CD8-positive, alpha-beta T cell (primary cell): ENCODE measurements at regions of chr1 and their contacts with region 1.

Region 1: GRCh38 chr1:30929135-30929889 is 20.8 kb upstream of the SDC3 start:
- DNase-seq: peak in 7 of 9 experiments; percentile 20 to 65 (median 51)
- ATAC-seq: peak; percentile 76
- H3K4me3 ChIP-seq: no peak overlapping the region
- H3K4me3 Mint-ChIP-seq: no peak overlapping the region
- H3K27ac ChIP-seq: peak overlapping the region in 1 of 2 experiments; percentile 55
- H3K27ac Mint-ChIP-seq: peak overlapping the region; percentile 10
- H3K4me1 ChIP-seq: peaks cover 3% of the 10 kb centered on the region
- H3K4me1 Mint-ChIP-seq: no peaks in the 10 kb centered on the region
- H3K27me3 ChIP-seq: no peaks in the 10 kb centered on the region
- H3K27me3 Mint-ChIP-seq: no peaks in the 10 kb centered on the region
- CTCF ChIP-seq: peak; percentile 76

Region 2: DNA sequence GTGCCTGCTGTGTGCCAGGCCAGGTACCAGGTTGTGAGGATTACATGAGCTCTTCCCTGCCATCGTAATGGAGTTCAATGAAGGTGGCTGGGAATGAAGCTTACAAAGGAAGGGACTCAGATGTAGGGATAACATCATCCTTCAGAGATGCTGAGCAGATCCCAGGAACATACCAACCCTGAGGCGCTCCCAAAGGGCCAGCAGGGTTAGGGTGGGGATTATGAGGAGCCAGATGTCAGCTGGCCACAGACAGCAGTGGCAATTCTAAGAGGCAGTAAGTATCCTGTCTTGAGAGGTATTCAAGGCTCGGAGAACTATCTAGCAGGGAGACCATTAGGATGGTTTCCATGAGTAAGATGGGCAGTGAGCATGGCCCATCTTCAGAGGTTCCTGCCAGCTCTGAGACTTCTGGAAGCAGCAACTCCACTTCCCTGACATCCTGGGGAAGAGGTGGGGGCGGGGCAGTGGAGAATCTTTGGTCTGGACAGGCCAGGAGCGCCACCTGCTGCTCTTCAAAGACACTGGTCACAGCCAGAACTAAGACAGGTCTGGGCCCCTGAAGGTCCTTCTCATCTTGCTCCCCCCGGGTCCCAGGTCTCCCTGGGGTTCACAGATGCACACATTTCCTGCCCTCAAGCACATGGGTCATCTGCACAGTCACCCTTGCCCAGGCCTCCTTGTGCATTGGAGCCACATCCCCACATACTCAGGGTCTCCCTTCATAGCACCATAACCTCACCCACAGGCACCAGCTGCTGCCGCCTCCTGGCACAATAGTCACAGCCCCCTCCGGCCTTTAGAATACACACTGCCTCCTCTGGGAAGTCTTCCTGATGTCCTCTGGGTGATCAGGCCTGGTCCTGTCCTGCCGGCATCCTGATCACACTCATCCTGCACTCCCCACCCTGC is 18.0 kb before region 1 on chr1:
- CTCF ChIA-PET with region 1: interaction called, 14 read pairs
- POLR2A ChIA-PET with region 1: no interaction called
- intact Hi-C with region 1: no loop called
- DNase-seq: peak in 7 of 9 experiments; percentile 29 to 67 (median 47)
- ATAC-seq: no peak
- H3K4me3 ChIP-seq: no peak overlapping the region
- H3K4me3 Mint-ChIP-seq: no peak overlapping the region
- H3K27ac ChIP-seq: no peak overlapping the region
- H3K27ac Mint-ChIP-seq: no peak overlapping the region
- H3K4me1 ChIP-seq: peaks cover 16% of the 10 kb centered on the region
- H3K4me1 Mint-ChIP-seq: peaks cover 17% of the 10 kb centered on the region
- H3K27me3 ChIP-seq: peaks cover 14 to 20% of the 10 kb centered on the region in 2 experiments
- H3K27me3 Mint-ChIP-seq: peaks cover 23% of the 10 kb centered on the region
- CTCF ChIP-seq: no peak

Region 3: DNA sequence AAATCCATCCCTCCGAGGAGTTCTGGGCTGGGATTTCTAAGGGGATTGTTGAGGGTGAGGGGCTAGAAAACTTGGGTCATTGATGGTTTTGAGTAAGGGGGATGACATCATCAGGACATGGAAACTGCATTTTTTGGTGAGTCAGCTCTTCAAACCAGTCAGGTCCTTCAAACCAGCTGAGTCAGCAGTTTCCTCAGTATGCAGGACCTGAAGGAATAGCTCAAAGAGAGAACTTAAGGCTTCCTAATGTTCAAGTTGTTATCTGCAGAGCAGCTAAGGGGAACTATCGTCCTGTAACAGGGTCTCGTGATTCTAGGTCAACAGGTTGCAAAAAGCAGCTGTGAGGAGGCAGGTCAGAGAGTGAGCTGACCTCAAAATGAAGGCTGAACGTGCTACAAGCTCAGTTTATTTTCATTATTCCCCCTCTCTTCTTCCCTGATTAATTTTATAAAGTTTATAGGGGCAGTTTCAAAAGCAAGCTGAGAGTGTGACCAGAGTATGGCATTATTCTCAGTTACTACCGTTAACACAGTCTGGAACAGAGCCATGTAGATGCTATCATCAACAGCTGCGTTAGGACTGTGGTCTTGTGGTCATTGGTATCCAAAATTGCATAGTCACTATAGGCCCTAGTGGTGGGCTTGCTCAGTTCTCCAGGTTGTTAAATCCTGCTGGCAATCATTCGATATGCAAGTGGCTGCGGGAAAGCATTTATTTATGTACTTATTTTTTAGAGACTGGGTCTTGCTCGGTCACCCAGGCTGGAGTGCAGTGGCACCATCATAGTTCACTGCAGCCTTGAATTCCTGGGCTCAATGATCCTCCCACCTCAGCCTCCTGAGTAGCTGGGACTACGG is 10.1 kb before region 1 on chr1:
- CTCF ChIA-PET with region 1: interaction called, 12 read pairs
- POLR2A ChIA-PET with region 1: no interaction called
- intact Hi-C with region 1: no loop called
- DNase-seq: peak in 2 of 9 experiments; percentile 15 to 25
- ATAC-seq: no peak
- H3K4me3 ChIP-seq: no peak overlapping the region
- H3K4me3 Mint-ChIP-seq: no peak overlapping the region
- H3K27ac ChIP-seq: no peak overlapping the region
- H3K27ac Mint-ChIP-seq: no peak overlapping the region
- H3K4me1 ChIP-seq: no peaks in the 10 kb centered on the region
- H3K4me1 Mint-ChIP-seq: no peaks in the 10 kb centered on the region
- H3K27me3 ChIP-seq: peaks cover 0 to 2% of the 10 kb centered on the region in 2 experiments
- H3K27me3 Mint-ChIP-seq: peaks cover 2% of the 10 kb centered on the region
- CTCF ChIP-seq: no peak

Region 4: DNA sequence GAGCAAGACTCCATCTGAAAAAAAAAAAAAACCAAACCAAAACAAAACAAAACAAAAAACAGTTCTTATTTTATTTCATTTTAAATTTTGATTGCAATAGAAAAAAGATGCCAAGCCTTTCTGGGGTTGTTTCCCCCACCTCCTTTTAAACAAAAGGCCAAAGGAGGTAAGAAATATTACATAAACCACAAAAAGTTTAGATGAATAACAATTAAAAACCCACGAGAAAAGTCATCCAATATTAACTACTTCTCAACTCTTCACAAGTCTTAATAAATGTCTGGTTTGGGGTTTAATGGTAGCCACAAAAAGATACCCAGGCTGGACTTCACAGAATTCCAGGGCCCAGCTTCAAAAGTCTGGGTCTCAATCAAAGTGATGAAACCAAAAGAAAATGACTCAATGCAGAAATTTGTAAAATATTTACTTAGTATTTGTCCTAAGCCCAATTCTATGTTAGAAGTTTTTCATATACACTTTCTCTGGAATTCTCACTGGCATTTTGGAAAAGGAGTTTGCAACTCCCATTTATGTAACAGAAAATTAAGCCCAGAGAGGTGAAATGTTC is 26.2 kb after region 1 on chr1:
- CTCF ChIA-PET with region 1: no interaction called
- POLR2A ChIA-PET with region 1: no interaction called
- intact Hi-C with region 1: no loop called
- DNase-seq: no peak
- ATAC-seq: no peak
- H3K4me3 ChIP-seq: no peak overlapping the region
- H3K4me3 Mint-ChIP-seq: no peak overlapping the region
- H3K27ac ChIP-seq: no peak overlapping the region
- H3K27ac Mint-ChIP-seq: peak overlapping the region; percentile 52
- H3K4me1 ChIP-seq: no peaks in the 10 kb centered on the region
- H3K4me1 Mint-ChIP-seq: peaks cover 38% of the 10 kb centered on the region
- H3K27me3 ChIP-seq: no peaks in the 10 kb centered on the region
- H3K27me3 Mint-ChIP-seq: no peaks in the 10 kb centered on the region
- CTCF ChIP-seq: no peak

Region 5: DNA sequence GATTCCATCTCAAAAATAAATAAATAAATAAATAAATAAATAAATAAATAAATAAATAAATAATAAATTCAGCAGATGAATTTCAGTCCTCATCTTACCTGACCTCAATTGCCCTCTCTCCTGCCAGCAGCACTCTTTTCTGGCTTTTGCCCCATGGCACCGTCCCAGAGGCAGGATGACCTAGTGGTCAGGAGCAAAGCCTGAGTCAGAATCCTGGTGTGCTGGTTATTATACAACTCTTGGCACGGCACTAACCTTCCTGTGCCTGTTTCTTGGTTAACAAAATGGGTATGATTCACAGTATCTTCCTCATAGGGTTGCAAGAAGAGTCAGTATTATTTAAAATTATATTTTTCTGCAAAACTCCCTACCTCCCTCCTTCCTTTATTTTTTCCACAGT is 267.4 kb after region 1 on chr1:
- CTCF ChIA-PET with region 1: no interaction called
- POLR2A ChIA-PET with region 1: no interaction called
- intact Hi-C with region 1: no loop called
- DNase-seq: no peak
- ATAC-seq: no peak
- H3K4me3 ChIP-seq: no peak overlapping the region
- H3K4me3 Mint-ChIP-seq: no peak overlapping the region
- H3K27ac ChIP-seq: no peak overlapping the region
- H3K27ac Mint-ChIP-seq: no peak overlapping the region
- H3K4me1 ChIP-seq: no peaks in the 10 kb centered on the region
- H3K4me1 Mint-ChIP-seq: no peaks in the 10 kb centered on the region
- H3K27me3 ChIP-seq: no peaks in the 10 kb centered on the region
- H3K27me3 Mint-ChIP-seq: peaks cover 6% of the 10 kb centered on the region
- CTCF ChIP-seq: no peak